CD8-positive, alpha-beta memory T cell (primary cell): ENCODE measurements at regions of chr12 and their contacts with region 1.

Region 1: GRCh38 chr12:121678716-121679580 is 9.5 kb upstream of the MORN3 start:
- DNase-seq: no peak
- H3K4me3 ChIP-seq: no peak overlapping the region
- H3K4me3 Mint-ChIP-seq: peak overlapping the region in 1 of 7 donors; percentile 24
- H3K27ac ChIP-seq: no peak overlapping the region
- H3K27ac Mint-ChIP-seq: peak overlapping the region in 6 of 8 donors; percentile 7 to 88 (median 59)
- H3K4me1 ChIP-seq: peaks cover 3% of the 10 kb centered on the region
- H3K4me1 Mint-ChIP-seq: peaks cover 6 to 11% (median 9%) of the 10 kb centered on the region in 3 donors
- H3K27me3 ChIP-seq: no peaks in the 10 kb centered on the region
- H3K27me3 Mint-ChIP-seq: peaks cover 0 to 4% of the 10 kb centered on the region in 2 donors

Region 2: GRCh38 chr12:121483949-121484348 is 195.0 kb before region 1 on chr12:
- CTCF ChIA-PET with region 1: interaction called, 11 read pairs
- POLR2A ChIA-PET with region 1: no interaction called
- DNase-seq: no peak
- H3K4me3 ChIP-seq: no peak overlapping the region
- H3K4me3 Mint-ChIP-seq: no peak overlapping the region
- H3K27ac ChIP-seq: no peak overlapping the region
- H3K27ac Mint-ChIP-seq: peak overlapping the region in 2 of 8 donors; percentile 19 to 87
- H3K4me1 ChIP-seq: no peaks in the 10 kb centered on the region
- H3K4me1 Mint-ChIP-seq: peaks cover 6 to 20% (median 6%) of the 10 kb centered on the region in 3 donors
- H3K27me3 ChIP-seq: no peaks in the 10 kb centered on the region
- H3K27me3 Mint-ChIP-seq: peaks cover 0 to 3% of the 10 kb centered on the region in 2 donors

Region 3: DNA sequence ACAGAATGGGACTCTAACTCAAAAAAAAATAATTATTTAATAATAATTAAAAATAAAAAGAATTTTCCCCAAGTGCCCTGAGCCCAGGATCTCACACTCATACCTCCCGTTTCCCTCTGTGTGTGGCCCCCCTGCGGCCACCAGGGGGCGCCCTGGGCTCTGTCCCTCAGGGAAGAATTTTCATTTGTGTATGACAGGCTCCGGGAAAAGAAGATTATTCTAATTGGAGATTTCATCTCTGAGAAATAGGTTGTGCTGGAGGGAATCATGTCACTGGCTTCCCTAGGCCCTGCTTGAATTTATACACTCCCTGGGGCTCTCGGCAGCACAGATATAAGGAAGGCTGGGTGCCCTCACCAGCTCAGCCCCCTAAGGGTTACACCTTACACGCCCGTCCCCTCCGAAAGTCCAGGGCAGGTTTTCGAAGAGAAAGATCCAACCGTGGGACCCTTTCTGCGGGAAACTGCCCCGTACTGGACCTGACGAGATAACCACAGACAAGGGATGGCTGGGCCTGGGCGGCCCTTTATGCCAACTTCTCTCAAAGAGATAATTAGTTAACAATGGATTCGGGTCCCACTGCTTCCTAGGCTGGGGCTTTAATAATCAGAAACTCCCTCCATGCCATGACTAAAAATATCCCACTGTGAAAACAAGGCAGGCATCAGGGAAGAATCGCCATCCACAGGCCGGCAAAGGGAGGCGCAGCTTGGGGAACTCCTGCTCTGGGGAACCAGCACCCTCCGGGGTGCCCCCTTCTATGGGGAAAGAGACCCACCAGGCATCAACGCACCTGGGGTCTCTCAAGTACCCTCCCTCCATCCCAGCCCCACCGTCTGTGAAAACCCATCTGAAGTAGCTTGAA is 178.8 kb before region 1 on chr12:
- CTCF ChIA-PET with region 1: interaction called, 12 read pairs
- POLR2A ChIA-PET with region 1: no interaction called
- DNase-seq: peak; percentile 61 to 81 (median 67)
- H3K4me3 ChIP-seq: no peak overlapping the region
- H3K4me3 Mint-ChIP-seq: no peak overlapping the region
- H3K27ac ChIP-seq: no peak overlapping the region
- H3K27ac Mint-ChIP-seq: peak overlapping the region in 4 of 8 donors; percentile 19 to 94 (median 73)
- H3K4me1 ChIP-seq: peaks cover 10% of the 10 kb centered on the region
- H3K4me1 Mint-ChIP-seq: peaks cover 28 to 55% (median 32%) of the 10 kb centered on the region in 3 donors
- H3K27me3 ChIP-seq: no peaks in the 10 kb centered on the region
- H3K27me3 Mint-ChIP-seq: no peaks in the 10 kb centered on the region

Region 4: DNA sequence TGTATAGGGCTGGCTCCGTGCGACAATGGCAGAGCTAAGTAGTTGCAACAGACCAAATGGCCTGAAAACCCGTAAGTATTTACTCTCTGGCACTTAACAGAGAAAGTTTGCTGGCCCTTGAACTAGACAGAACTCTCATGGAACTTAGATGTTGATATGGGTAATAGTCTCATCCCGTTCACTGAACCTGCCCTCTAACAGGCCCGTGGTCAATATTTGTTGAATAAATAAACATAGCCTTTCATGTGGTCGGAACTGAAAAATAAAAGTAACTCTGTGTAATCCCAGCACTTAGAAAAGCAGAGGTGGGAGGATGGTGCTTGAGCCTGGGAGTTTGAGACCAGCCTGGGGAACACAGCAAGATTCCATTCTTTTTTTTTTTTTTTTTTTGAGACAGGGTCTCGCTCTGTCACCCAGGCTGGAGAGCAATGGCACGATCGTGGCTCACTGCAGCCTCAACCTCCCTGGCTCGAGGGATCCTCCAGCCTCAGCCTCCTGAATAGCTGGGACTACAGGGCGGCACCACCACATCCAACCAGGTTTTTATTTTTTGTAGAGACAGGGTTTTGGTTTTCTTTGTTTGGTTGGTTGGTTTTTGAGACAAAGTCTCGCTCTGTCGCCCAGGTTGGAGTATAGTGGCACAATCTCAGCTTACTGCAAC is 127.8 kb before region 1 on chr12:
- CTCF ChIA-PET with region 1: interaction called, 57 read pairs
- POLR2A ChIA-PET with region 1: interaction called, 8 read pairs
- DNase-seq: no peak
- H3K4me3 ChIP-seq: no peak overlapping the region
- H3K4me3 Mint-ChIP-seq: no peak overlapping the region
- H3K27ac ChIP-seq: no peak overlapping the region
- H3K27ac Mint-ChIP-seq: peak overlapping the region; percentile 10 to 98 (median 96)
- H3K4me1 ChIP-seq: peaks cover 13% of the 10 kb centered on the region
- H3K4me1 Mint-ChIP-seq: peaks cover 9 to 12% (median 12%) of the 10 kb centered on the region in 3 donors
- H3K27me3 ChIP-seq: no peaks in the 10 kb centered on the region
- H3K27me3 Mint-ChIP-seq: no peaks in the 10 kb centered on the region

Region 5: GRCh38 chr12:121748218-121748570 is 69.2 kb after region 1 on chr12:
- CTCF ChIA-PET with region 1: no interaction called
- POLR2A ChIA-PET with region 1: no interaction called
- DNase-seq: no peak
- H3K4me3 ChIP-seq: no peak overlapping the region
- H3K4me3 Mint-ChIP-seq: no peak overlapping the region
- H3K27ac ChIP-seq: peak overlapping the region; percentile 17
- H3K27ac Mint-ChIP-seq: peak overlapping the region in 2 of 8 donors; percentile 52 to 70
- H3K4me1 ChIP-seq: no peaks in the 10 kb centered on the region
- H3K4me1 Mint-ChIP-seq: peaks cover 3 to 7% (median 7%) of the 10 kb centered on the region in 3 donors
- H3K27me3 ChIP-seq: no peaks in the 10 kb centered on the region
- H3K27me3 Mint-ChIP-seq: peaks cover 0 to 1% of the 10 kb centered on the region in 2 donors